ENCODE measurements at regions of chr10 and their contacts with region 1.

Region 1: GRCh38 chr10:89251409-89252224 is at the start of gene LIPA:
- DNase-seq: peak; percentile 99
- H3K4me3 ChIP-seq: peak within 1 kb of the TSS; percentile 96
- H3K27ac ChIP-seq: peak within 1 kb of the TSS; percentile 73
- H3K4me1 ChIP-seq: peaks cover 6% of the 10 kb centered on the region
- H3K27me3 ChIP-seq: no peaks in the 10 kb centered on the region
- CTCF ChIP-seq: no peak
- total RNA-seq, gene LIPA: 38.0 and 40.3 TPM in 2 replicates

Region 2: GRCh38 chr10:89224739-89225443 is 26.7 kb before region 1 on chr10:
- CTCF ChIA-PET with region 1: no interaction called
- POLR2A ChIA-PET with region 1: no interaction called
- intact Hi-C with region 1: loop called (anchors 1 kb)
- DNase-seq: no peak
- H3K4me3 ChIP-seq: no peak overlapping the region
- H3K27ac ChIP-seq: no peak overlapping the region
- H3K4me1 ChIP-seq: no peaks in the 10 kb centered on the region
- H3K27me3 ChIP-seq: no peaks in the 10 kb centered on the region
- CTCF ChIP-seq: no peak